Pancreas (tissue), 10 donors: ENCODE measurements at regions of chr10 and their contacts with region 1.

Region 1: GRCh38 chr10:4546500-4546899 is 279.5 kb upstream of the AKR1E2 start:
- DNase-seq: no peak
- ATAC-seq: no peak
- H3K4me3 ChIP-seq: no peak overlapping the region
- H3K27ac ChIP-seq: no peak overlapping the region
- H3K4me1 ChIP-seq: no peaks in the 10 kb centered on the region
- H3K27me3 ChIP-seq: peaks cover 0 to 4% (median 0%) of the 10 kb centered on the region in 4 donors
- CTCF ChIP-seq: no peak

Region 2: GRCh38 chr10:4581929-4582328 is 35.4 kb after region 1 on chr10:
- intact Hi-C with region 1: no loop called
- DNase-seq: no peak
- ATAC-seq: no peak
- H3K4me3 ChIP-seq: no peak overlapping the region
- H3K27ac ChIP-seq: no peak overlapping the region
- H3K4me1 ChIP-seq: peaks cover 0 to 4% (median 0%) of the 10 kb centered on the region in 3 donors
- H3K27me3 ChIP-seq: peaks cover 0 to 11% (median 0%) of the 10 kb centered on the region in 4 donors
- CTCF ChIP-seq: no peak

Region 3: DNA sequence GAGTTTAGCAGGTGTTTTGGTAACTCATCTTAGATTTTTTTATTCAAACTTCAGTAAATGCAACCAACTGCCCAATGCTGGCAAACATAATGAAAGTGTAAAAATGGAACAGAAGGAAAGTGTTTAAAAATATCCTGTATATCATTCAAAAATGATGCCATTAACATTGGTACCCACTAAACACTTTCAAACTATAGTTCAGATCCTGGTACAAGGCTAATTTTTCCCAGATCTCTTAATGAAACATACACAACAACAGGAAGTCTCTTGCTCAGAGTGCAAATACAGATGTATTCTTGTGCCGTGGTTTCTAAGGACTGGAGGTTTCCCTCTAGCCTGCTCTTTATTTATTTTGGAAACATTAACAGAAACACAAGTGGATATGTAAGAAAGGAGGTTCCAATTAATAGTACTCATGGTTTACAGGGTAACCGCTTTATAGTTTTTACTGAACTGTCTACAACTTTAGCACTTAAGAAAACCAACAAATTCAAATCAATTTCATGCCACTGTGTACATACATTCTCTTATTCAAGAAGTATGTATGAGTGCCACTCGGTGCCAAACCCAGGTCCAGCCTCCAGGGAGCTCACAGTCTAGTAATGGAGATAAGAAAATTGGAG is 103.5 kb after region 1 on chr10:
- intact Hi-C with region 1: loop called in 1 of 3 experiments (anchors 5 kb)
- DNase-seq: no peak
- ATAC-seq: peak in 1 of 4 donors; percentile 14
- H3K4me3 ChIP-seq: no peak overlapping the region
- H3K27ac ChIP-seq: peak overlapping the region in 1 of 4 donors; percentile 33
- H3K4me1 ChIP-seq: no peaks in the 10 kb centered on the region
- H3K27me3 ChIP-seq: peaks cover 0 to 11% (median 0%) of the 10 kb centered on the region in 4 donors
- CTCF ChIP-seq: no peak